Endothelial cell of umbilical vein (primary cell): ENCODE measurements at regions of chr1 and their contacts with region 1.

Region 1: GRCh38 chr1:61043010-61043820 is 39.1 kb upstream of the NFIA start:
- DNase-seq: peak; percentile 85
- H3K4me3 ChIP-seq: peak overlapping the region; percentile 39 to 59 (median 54)
- H3K27ac ChIP-seq: peak overlapping the region; percentile 62
- H3K4me1 ChIP-seq: peaks cover 2% of the 10 kb centered on the region
- H3K27me3 ChIP-seq: no peaks in the 10 kb centered on the region
- CTCF ChIP-seq: peak; percentile 85 to 94
- POLR2A ChIP-seq: no peak

Region 2: GRCh38 chr1:60153961-60154360 is 889.3 kb before region 1 on chr1:
- CTCF ChIA-PET with region 1: interaction called, 23 read pairs
- POLR2A ChIA-PET with region 1: no interaction called
- dilution Hi-C with region 1: no loop called
- intact Hi-C with region 1: loop called (anchors 1 kb)
- DNase-seq: no peak
- H3K4me3 ChIP-seq: no peak overlapping the region
- H3K27ac ChIP-seq: no peak overlapping the region
- H3K4me1 ChIP-seq: no peaks in the 10 kb centered on the region
- H3K27me3 ChIP-seq: no peaks in the 10 kb centered on the region
- CTCF ChIP-seq: no peak
- POLR2A ChIP-seq: no peak

Region 3: GRCh38 chr1:60848583-60849188 is 194.5 kb before region 1 on chr1:
- CTCF ChIA-PET with region 1: interaction called, 133 read pairs
- POLR2A ChIA-PET with region 1: no interaction called
- dilution Hi-C with region 1: no loop called
- intact Hi-C with region 1: loop called (anchors 1 kb)
- DNase-seq: peak; percentile 79
- H3K4me3 ChIP-seq: no peak overlapping the region
- H3K27ac ChIP-seq: no peak overlapping the region
- H3K4me1 ChIP-seq: no peaks in the 10 kb centered on the region
- H3K27me3 ChIP-seq: no peaks in the 10 kb centered on the region
- CTCF ChIP-seq: peak; percentile 35 to 45
- POLR2A ChIP-seq: no peak

Region 4: GRCh38 chr1:60978421-60979357 is 64.5 kb before region 1 on chr1:
- CTCF ChIA-PET with region 1: interaction called, 94 read pairs
- POLR2A ChIA-PET with region 1: interaction called, 3 read pairs
- dilution Hi-C with region 1: no loop called
- intact Hi-C with region 1: loop called (anchors 1 kb)
- DNase-seq: peak; percentile 69
- H3K4me3 ChIP-seq: no peak overlapping the region
- H3K27ac ChIP-seq: no peak overlapping the region
- H3K4me1 ChIP-seq: peaks cover 6% of the 10 kb centered on the region
- H3K27me3 ChIP-seq: no peaks in the 10 kb centered on the region
- CTCF ChIP-seq: peak; percentile 60 to 77
- POLR2A ChIP-seq: no peak

Region 5: GRCh38 chr1:61077676-61078541 is 34.7 kb after region 1 on chr1:
- CTCF ChIA-PET with region 1: interaction called, 11 read pairs
- POLR2A ChIA-PET with region 1: no interaction called
- dilution Hi-C with region 1: no loop called
- intact Hi-C with region 1: no loop called
- DNase-seq: peak; percentile 100
- H3K4me3 ChIP-seq: peak overlapping the region; percentile 44 to 97 (median 77)
- H3K27ac ChIP-seq: peak overlapping the region; percentile 45
- H3K4me1 ChIP-seq: peaks cover 41% of the 10 kb centered on the region
- H3K27me3 ChIP-seq: no peaks in the 10 kb centered on the region
- CTCF ChIP-seq: no peak
- POLR2A ChIP-seq: peak; percentile 10

Region 6: DNA sequence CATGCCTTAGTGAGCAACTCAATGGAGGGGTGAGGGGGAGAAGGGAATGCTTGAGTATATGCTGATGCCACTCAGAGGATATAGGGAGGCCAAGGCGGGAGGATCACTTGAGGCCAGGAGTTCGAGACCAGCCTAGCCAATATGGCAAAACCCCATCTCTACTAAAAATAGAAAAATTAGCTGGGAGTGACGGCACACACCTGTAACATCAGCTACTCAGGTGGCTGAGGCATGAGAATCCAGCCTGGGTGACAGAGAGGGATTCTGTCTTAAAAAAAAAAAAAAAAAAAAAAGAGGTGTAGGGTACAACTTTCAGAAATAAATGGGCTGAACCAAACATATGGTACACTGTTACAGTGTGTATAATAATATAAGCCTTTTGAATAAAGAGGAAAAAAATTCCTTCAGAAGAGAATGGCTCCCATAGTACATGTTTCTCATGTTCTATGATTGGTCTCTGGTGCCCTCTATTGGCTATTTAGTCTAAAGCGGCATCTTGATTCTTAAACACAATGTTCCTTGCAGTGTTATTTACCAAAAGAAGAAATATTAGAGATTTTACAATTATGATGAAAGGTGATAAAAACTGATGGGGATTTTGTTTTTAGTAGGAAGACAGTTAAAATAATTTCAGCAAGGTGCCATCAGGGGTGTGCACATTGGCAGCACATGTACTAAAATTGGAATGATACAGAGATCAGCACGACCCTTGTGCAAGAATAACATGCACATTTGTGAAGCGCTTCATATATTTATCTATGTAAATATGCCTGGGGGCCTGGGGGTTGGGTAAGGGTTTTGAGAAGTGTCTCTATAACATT is 808.8 kb after region 1 on chr1:
- CTCF ChIA-PET with region 1: interaction called, 65 read pairs
- POLR2A ChIA-PET with region 1: no interaction called
- dilution Hi-C with region 1: no loop called
- intact Hi-C with region 1: loop called (anchors 2 kb)
- DNase-seq: peak; percentile 74
- H3K4me3 ChIP-seq: no peak overlapping the region
- H3K27ac ChIP-seq: peak overlapping the region; percentile 45
- H3K4me1 ChIP-seq: peaks cover 14% of the 10 kb centered on the region
- H3K27me3 ChIP-seq: no peaks in the 10 kb centered on the region
- CTCF ChIP-seq: peak; percentile 40 to 58
- POLR2A ChIP-seq: no peak